ENCODE measurements at regions of chr10 and their contacts with region 1.

Region 1: DNA sequence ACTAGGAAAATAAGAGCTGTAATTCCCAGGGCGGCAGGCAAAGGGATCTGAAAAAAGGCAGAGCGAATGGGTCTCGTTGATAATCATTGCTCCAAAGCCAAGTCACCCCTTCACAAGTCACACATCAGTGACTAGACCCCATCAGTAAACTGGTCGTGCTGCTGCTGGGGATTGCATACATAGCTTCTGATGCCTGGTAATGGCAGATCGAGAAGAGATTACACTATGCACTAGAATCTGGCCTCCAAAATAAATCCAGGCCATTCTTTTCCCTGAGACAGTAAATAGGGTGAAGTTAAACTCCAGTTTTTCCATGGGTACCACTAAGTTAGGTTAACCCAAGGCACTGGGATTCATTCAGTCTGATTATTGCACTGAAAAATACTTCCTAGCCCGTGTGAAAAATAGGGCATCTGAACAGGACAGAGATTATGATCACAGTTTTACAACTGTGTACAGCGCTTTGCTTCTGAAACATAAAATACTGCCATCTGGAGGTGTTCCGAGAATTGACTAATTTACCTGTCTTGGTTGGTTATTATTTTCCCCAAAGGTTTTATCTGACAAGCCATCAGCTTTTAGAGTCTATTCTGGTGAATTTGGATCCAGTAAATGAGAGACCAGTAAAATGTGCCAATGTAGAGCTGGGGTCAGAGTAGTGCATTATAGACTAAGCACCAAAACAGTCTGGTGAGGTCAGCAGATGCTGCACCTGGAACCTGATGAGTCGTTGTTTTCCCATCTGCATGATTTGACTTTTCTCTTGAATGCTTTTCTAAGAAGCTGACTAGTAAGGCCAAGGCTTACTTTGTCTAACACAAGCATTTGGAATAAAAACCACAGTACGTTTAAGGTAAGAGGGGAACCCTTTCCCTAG is 82.9 kb upstream of the AFAP1L2 start:
- DNase-seq: peak; percentile 50
- ATAC-seq: peak; percentile 72
- H3K4me3 Mint-ChIP-seq: no peak overlapping the region
- H3K27ac Mint-ChIP-seq: peak overlapping the region; percentile 76
- H3K4me1 Mint-ChIP-seq: peaks cover 56% of the 10 kb centered on the region
- H3K27me3 Mint-ChIP-seq: no peaks in the 10 kb centered on the region
- CTCF ChIP-seq: peak; percentile 42

Region 2: DNA sequence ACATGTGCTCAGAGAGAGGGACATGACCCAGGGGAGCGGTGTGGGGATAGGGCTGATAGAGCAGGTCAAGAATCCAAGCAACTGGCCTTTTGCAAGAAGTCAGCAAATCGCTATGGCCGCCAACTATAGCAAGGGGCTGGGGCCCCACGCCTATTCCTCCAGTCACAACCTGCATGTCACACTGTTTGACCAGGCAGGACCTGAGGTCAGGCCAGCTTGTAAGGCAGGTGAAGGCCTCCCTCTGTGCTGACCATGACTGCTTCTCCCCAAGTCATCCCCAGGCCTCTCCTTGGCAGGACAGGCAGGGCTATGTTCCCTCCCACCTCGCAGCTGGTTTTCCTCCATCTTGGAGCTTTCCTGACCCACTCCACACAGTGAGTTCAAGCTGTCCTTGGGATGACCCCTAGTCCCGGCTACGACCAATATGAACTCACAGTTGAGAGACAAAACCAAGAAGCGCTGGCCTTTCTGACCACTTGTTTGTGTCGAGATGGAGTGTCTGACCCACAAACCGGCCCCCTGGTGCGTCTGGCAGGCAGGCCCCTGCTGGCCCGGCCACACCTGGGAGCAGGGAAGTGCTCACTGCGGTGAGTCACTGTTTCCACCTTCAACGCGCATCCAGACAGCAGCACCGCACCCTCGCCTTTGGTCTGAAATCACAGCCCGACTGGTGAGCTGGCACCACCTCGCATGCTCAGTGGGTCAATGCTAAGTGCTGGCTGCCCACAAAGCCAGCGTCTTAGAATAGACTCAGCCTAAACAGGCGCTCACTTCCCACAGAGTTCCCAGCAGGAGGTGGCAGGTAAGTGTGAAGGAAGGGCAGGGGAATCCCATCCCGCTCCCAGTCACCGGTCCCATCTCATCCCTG is 166.7 kb before region 1 on chr10:
- CTCF ChIA-PET with region 1: no interaction called
- POLR2A ChIA-PET with region 1: no interaction called
- intact Hi-C with region 1: no loop called
- DNase-seq: no peak
- ATAC-seq: no peak
- H3K4me3 Mint-ChIP-seq: no peak overlapping the region
- H3K27ac Mint-ChIP-seq: no peak overlapping the region
- H3K4me1 Mint-ChIP-seq: no peaks in the 10 kb centered on the region
- H3K27me3 Mint-ChIP-seq: no peaks in the 10 kb centered on the region
- CTCF ChIP-seq: no peak

Region 3: GRCh38 chr10:114520453-114520852 is 33.3 kb after region 1 on chr10:
- CTCF ChIA-PET with region 1: interaction called, 23 read pairs
- POLR2A ChIA-PET with region 1: interaction called, 16 read pairs
- intact Hi-C with region 1: loop called (anchors 5 kb)
- DNase-seq: no peak
- ATAC-seq: peak; percentile 1
- H3K4me3 Mint-ChIP-seq: peak overlapping the region; percentile 59
- H3K27ac Mint-ChIP-seq: peak overlapping the region; percentile 91
- H3K4me1 Mint-ChIP-seq: peaks cover 91% of the 10 kb centered on the region
- H3K27me3 Mint-ChIP-seq: no peaks in the 10 kb centered on the region
- CTCF ChIP-seq: no peak

Region 4: DNA sequence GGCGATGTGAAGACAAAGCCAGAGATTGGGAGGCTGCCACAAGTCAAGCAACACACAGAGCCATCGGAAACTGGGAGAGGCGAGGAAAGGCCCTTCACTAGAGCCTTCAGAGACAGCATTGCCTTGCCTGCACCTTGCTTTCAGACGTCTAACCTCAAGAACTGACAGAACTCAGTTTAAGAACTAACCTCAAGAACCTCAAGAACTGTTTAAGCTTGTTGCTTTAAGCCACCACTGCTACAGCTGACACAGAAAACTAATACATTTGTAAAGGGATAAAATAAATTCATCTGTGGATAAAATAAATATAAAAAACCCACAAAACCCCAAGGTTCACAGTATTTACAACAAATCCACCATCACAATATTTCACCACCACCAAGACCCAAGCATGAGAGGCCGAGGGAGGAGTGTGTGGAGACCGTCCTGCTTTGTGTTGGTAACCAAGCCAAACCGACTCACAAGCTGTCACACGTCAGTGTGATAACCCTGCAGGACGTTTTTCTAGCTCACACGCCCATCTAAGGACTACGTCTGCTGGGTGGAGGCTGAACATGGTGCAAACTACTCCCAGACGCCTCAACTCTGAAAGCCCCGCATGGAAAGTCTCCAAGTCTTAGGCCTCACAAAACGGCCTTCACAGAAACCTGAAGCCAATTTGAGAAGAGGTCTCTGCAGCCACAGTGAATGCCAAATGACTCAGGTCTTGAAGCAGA is 54.1 kb after region 1 on chr10:
- CTCF ChIA-PET with region 1: interaction called, 17 read pairs
- POLR2A ChIA-PET with region 1: interaction called, 3 read pairs
- intact Hi-C with region 1: loop called (anchors 5 kb)
- DNase-seq: peak; percentile 89
- ATAC-seq: peak; percentile 83
- H3K4me3 Mint-ChIP-seq: peak overlapping the region; percentile 70
- H3K27ac Mint-ChIP-seq: peak overlapping the region; percentile 100
- H3K4me1 Mint-ChIP-seq: peaks cover 87% of the 10 kb centered on the region
- H3K27me3 Mint-ChIP-seq: no peaks in the 10 kb centered on the region
- CTCF ChIP-seq: no peak

Measured in activated CD8-positive, alpha-beta T cell treated with anti-CD3 and anti-CD28 coated beads for 36 hours (primary cell).